H1 (cell line): ENCODE measurements at regions of chr3 and their contacts with region 1.

Region 1: DNA sequence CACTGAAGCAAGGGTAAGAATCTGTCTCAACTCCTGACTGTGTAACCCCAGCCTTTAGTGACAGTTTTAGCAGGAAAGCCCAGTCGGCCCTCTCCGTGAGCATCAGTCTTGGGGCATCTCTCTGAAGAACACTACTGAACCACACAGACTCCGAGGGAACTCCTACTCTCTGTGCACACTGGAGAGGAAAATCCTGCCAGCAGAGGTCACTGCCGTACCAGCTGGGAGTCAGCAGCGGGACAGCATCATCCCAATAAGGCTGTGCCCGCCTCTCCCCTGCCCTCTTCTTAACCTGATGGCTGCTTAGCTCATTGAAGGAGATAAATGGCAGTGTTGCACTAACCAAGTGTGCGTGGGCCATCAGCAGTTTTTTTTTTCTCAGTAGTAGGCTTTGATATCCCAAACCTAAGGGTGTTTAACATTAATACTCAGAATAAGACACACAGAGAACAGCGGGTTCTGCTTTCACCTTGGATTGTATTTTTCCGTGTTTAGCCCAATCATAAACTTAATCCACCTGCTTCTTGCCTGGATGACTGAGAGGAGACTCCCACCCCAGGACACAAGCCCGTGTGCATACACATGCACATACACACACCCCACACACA is 26.6 kb upstream of the RASA2 start:
- DNase-seq: peak; percentile 69 to 92
- H3K4me3 ChIP-seq: no peak overlapping the region
- H3K27ac ChIP-seq: no peak overlapping the region
- H3K4me1 ChIP-seq: peaks cover 0 to 3% (median 0%) of the 10 kb centered on the region in 4 experiments; a peak in 3 of 7 replicates
- H3K27me3 ChIP-seq: no peaks in the 10 kb centered on the region
- CTCF ChIP-seq: peak; percentile 92 to 94 (median 94)
- EP300 ChIP-seq: no peak
- POLR2A ChIP-seq: no peak
- RAD21 ChIP-seq: peak; percentile 96 to 97

Region 2: DNA sequence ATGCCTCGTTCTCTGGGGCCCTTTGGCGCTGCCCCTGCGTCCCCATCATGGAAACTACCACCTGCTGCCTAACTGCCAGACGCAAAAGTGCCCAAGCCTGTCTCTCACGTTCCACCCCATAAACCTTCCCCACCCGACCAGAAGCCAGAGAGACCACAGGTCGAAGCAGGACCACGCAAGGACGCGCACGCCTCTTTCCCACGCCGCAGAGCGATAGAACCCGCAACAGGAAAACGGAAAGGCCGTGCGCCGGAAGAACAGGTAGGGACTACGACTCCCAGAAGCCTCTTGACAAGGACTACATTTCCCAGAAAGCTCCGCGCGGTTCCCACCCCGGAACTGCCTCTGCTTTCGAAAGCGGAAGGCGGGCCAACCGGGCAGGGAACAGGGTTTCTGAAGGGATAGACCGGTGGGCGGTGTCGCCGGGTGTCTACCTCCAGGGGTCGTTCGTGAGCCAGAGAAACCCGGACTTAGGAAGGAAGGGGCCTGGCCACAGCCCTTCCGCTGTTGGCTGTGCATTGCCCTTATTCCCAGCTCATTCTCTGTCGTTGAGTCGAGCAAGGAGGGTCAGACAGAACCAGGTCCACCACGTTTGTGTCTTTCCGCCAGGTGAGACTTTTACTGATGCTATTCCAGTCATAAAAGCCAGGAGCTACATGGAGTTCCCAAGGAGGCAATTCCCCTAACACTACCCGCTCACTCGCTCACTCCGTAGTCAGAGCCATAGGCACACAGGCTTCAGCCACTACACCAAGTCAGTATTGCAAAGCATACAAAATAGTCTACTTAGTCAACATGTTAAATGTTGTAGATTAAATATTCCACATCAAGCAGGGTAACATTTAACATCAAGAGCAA is 148.5 kb before region 1 on chr3:
- CTCF ChIA-PET with region 1: interaction called, 349 read pairs
- POLR2A ChIA-PET with region 1: no interaction called
- DNase-seq: peak; percentile 94 to 98
- H3K4me3 ChIP-seq: peak overlapping the region; percentile 69 to 99 (median 85)
- H3K27ac ChIP-seq: no peak overlapping the region
- H3K4me1 ChIP-seq: peaks cover 0 to 4% (median 2%) of the 10 kb centered on the region in 4 experiments; a peak in 4 of 7 replicates
- H3K27me3 ChIP-seq: peaks cover 0 to 7% (median 3%) of the 10 kb centered on the region in 4 experiments; a peak in 1 of 7 replicates
- CTCF ChIP-seq: peak; percentile 74 to 91 (median 84)
- EP300 ChIP-seq: no peak
- POLR2A ChIP-seq: peak; percentile 34 to 73
- RAD21 ChIP-seq: peak; percentile 89

Region 3: DNA sequence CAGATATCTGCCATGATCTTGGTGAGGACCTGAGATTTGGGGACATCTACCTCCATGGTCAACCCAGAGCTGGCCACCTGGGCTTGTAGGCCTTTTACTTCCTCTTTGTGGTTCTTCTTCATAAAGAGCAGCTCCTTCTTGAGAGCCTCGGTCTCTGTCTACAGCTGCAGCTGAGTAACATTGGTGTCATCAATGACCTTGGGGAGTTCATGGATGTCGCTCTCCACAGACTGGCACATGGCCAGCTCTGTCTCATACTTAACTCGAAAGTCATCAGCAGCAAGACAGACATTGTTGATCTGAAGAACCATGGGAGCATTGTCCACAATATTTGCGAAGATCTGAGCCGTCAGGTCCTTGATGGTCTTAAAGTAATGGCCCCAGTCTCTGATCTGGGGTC is 11.0 kb after region 1 on chr3:
- CTCF ChIA-PET with region 1: interaction called, 33 read pairs
- POLR2A ChIA-PET with region 1: no interaction called
- DNase-seq: no peak
- H3K4me3 ChIP-seq: no peak overlapping the region
- H3K27ac ChIP-seq: no peak overlapping the region
- H3K4me1 ChIP-seq: no peaks in the 10 kb centered on the region
- H3K27me3 ChIP-seq: no peaks in the 10 kb centered on the region
- CTCF ChIP-seq: no peak
- EP300 ChIP-seq: no peak
- POLR2A ChIP-seq: no peak
- RAD21 ChIP-seq: no peak

Region 4: GRCh38 chr3:141561426-141562034 is 101.3 kb after region 1 on chr3:
- CTCF ChIA-PET with region 1: interaction called, 291 read pairs
- POLR2A ChIA-PET with region 1: interaction called, 3 read pairs
- DNase-seq: no peak
- H3K4me3 ChIP-seq: no peak overlapping the region
- H3K27ac ChIP-seq: no peak overlapping the region
- H3K4me1 ChIP-seq: no peaks in the 10 kb centered on the region
- H3K27me3 ChIP-seq: no peaks in the 10 kb centered on the region
- CTCF ChIP-seq: peak in 2 of 3 experiments; percentile 67 to 80; a peak in 2 of 4 replicates
- EP300 ChIP-seq: no peak
- POLR2A ChIP-seq: no peak
- RAD21 ChIP-seq: peak; percentile 88 to 97

Region 5: GRCh38 chr3:141575879-141576743 is 115.9 kb after region 1 on chr3:
- CTCF ChIA-PET with region 1: interaction called, 12 read pairs
- POLR2A ChIA-PET with region 1: no interaction called
- DNase-seq: no peak
- H3K4me3 ChIP-seq: no peak overlapping the region
- H3K27ac ChIP-seq: no peak overlapping the region
- H3K4me1 ChIP-seq: no peaks in the 10 kb centered on the region
- H3K27me3 ChIP-seq: no peaks in the 10 kb centered on the region
- CTCF ChIP-seq: peak in 1 of 3 experiments; percentile 30; a peak in 2 of 4 replicates
- EP300 ChIP-seq: no peak
- POLR2A ChIP-seq: no peak
- RAD21 ChIP-seq: peak in 1 of 2 experiments; percentile 40; a peak in 1 of 4 replicates